PC-9 (cell line): ENCODE measurements at regions of chr7 and their contacts with region 1.

Region 1: DNA sequence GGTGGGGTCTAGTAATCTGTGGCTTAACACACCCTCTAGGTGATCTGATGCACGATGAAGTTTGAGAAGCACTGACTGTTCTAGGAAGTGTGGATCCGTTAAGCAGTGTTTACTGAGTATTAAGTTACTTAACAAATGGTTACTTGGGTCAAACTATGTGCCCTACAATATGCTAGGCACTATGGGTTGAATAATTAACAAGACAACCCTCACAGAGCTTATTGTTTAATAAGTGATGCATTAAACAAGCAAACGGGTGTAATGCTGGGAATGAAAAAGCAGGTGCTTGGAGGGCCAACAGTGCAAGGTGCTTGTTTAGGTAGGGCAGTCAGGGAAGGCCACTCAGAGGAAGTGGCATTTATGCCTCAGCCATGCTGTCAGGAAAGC is 378.0 kb upstream of the PODXL start:
- DNase-seq: no peak
- H3K4me3 ChIP-seq: no peak overlapping the region
- H3K27ac ChIP-seq: no peak overlapping the region
- H3K4me1 ChIP-seq: no peaks in the 10 kb centered on the region
- H3K27me3 ChIP-seq: peaks cover 92% of the 10 kb centered on the region
- CTCF ChIP-seq: no peak

Region 2: GRCh38 chr7:132230462-132230861 is 296.0 kb after region 1 on chr7:
- CTCF ChIA-PET with region 1: no interaction called
- POLR2A ChIA-PET with region 1: interaction called, 12 read pairs
- intact Hi-C with region 1: no loop called
- DNase-seq: no peak
- H3K4me3 ChIP-seq: no peak overlapping the region
- H3K27ac ChIP-seq: no peak overlapping the region
- H3K4me1 ChIP-seq: no peaks in the 10 kb centered on the region
- H3K27me3 ChIP-seq: peaks cover 93% of the 10 kb centered on the region
- CTCF ChIP-seq: no peak